SK-N-SH (cell line): ENCODE measurements at regions of chr2 and their contacts with region 1.

Region 1: GRCh38 chr2:43219383-43220228 is 6.8 kb downstream of the ZFP36L2 start:
- DNase-seq: peak; percentile 87
- H3K4me3 ChIP-seq: peak overlapping the region; percentile 95 to 97
- H3K27ac ChIP-seq: peak overlapping the region; percentile 94 to 95
- H3K4me1 ChIP-seq: peaks cover 46 to 69% of the 10 kb centered on the region in 2 experiments; a peak in 3 of 4 replicates
- H3K27me3 ChIP-seq: no peaks in the 10 kb centered on the region
- CTCF ChIP-seq: no peak
- EP300 ChIP-seq: peak; percentile 13 to 47; a peak in 1 of 4 replicates
- RAD21 ChIP-seq: peak; percentile 42

Region 2: DNA sequence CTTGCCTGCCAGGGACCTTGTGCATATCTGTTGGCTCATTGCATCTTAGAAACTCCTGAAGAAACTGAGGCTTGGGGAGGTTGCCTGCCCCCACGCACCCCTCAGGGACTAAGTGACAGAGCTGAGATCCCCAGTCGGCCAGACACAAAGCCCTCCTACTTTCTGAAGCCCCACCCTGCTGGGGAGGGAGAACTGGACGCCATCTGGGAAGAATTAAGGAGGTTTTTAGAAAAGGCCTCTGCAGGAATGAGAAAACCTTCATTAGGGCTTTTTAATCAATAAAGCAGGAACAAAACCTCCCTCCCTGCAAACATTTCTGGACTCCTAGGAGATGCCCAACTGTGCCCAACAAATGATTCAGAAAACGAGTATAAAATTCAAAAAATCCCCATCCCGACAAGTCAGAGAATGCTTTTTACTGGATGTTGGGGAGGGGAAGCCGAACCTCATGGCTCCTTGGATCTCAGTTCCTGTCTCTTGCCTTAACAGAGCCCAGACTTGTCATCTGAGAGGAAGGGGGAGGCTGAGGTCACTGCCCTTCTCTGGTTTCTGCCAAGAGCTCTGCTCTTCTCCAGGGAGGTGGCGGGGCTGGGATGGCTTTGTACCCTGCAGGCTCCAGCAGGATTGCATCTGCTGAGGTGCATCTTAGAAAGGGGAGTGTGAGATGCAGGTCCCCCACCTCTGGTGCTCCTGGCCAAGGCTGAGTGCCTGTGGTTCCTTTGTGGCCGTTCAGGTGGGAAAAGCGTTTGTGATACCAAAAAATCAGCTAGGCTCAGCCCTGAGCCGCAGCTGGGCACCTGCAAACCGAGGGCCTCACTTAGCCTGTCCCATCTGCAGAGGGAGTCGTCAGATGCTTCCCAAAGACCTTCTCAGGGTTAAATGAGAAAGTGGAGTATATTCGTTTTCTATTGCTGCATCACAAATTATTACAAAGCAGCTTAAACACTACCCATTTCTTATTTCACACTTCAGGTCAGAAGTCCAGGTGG is 135.6 kb before region 1 on chr2:
- CTCF ChIA-PET with region 1: interaction called, 21 read pairs
- POLR2A ChIA-PET with region 1: interaction called, 13 read pairs
- DNase-seq: peak; percentile 75
- H3K4me3 ChIP-seq: 0 out of 4 replicates have a peak overlapping the region, but pooled peaks of 1 of the 2 experiments have one; percentile 7
- H3K27ac ChIP-seq: peak overlapping the region; percentile 89 to 98
- H3K4me1 ChIP-seq: peaks cover 58 to 67% of the 10 kb centered on the region in 2 experiments
- H3K27me3 ChIP-seq: no peaks in the 10 kb centered on the region
- CTCF ChIP-seq: no peak
- EP300 ChIP-seq: peak in 1 of 2 experiments; percentile 62; a peak in 2 of 4 replicates
- RAD21 ChIP-seq: no peak; the same call in 1 of the 2 replicates

Region 3: DNA sequence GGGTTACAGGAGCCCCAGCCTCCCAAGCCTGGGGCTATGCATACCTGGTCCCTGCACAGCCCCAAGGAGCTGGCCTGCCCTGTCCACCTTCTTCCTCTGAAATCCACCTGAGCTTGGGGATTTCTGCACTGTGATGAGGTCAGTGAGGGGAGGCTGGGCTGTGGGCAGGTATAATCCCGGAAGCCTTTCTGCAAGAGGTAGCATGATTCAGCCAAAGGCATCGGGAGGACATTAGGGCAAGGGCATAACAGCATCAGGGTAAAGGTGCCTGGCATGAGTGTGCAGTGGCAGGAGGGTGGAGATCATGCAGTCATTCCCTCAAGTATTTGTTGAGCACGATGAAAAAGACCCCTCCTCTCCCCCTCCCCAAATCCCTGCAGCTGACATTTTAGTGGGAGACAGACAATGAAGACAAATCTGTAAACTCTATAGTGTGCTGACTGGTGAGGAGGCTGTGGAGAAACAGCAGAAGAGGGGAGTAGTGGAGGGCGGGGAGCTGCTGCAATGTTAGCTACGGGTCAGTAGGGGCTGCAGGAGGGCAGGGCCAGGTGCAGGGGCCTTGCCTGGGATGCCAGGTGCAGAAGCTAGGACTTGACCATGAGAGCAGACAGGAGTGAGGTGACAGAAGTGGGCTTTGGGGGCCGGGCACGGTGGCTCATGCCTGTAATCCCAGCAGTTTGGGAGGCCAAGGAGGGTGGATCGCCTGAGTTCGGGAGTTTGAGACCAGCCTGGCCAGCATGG is 11.9 kb before region 1 on chr2:
- CTCF ChIA-PET with region 1: interaction called, 22 read pairs
- POLR2A ChIA-PET with region 1: interaction called, 3 read pairs
- DNase-seq: no peak
- H3K4me3 ChIP-seq: no peak overlapping the region
- H3K27ac ChIP-seq: no peak overlapping the region
- H3K4me1 ChIP-seq: no peaks in the 10 kb centered on the region; a peak in 1 of 4 replicates
- H3K27me3 ChIP-seq: no peaks in the 10 kb centered on the region
- CTCF ChIP-seq: no peak
- EP300 ChIP-seq: no peak
- RAD21 ChIP-seq: no peak

Region 4: GRCh38 chr2:43325107-43325811 is 105.7 kb after region 1 on chr2:
- CTCF ChIA-PET with region 1: no interaction called
- POLR2A ChIA-PET with region 1: no interaction called
- DNase-seq: no peak
- H3K4me3 ChIP-seq: no peak overlapping the region
- H3K27ac ChIP-seq: no peak overlapping the region
- H3K4me1 ChIP-seq: peaks cover 12 to 38% of the 10 kb centered on the region in 2 experiments; a peak in 3 of 4 replicates
- H3K27me3 ChIP-seq: no peaks in the 10 kb centered on the region
- CTCF ChIP-seq: no peak
- EP300 ChIP-seq: no peak
- RAD21 ChIP-seq: no peak

Region 5: GRCh38 chr2:44038277-44038676 is 818.7 kb after region 1 on chr2:
- CTCF ChIA-PET with region 1: no interaction called
- POLR2A ChIA-PET with region 1: no interaction called
- DNase-seq: no peak
- H3K4me3 ChIP-seq: no peak overlapping the region
- H3K27ac ChIP-seq: no peak overlapping the region
- H3K4me1 ChIP-seq: no peaks in the 10 kb centered on the region; a peak in 1 of 4 replicates
- H3K27me3 ChIP-seq: no peaks in the 10 kb centered on the region
- CTCF ChIP-seq: no peak
- EP300 ChIP-seq: no peak
- RAD21 ChIP-seq: no peak